Aorta (tissue), 5 donors: ENCODE measurements at regions of chr15 and their contacts with region 1.

Region 1: GRCh38 chr15:58440158-58440910 is 8.5 kb downstream of the LIPC start:
- DNase-seq: no peak
- ATAC-seq: peak; percentile 76
- H3K4me3 ChIP-seq: no peak overlapping the region
- H3K27ac ChIP-seq: peak overlapping the region; percentile 30 to 52
- H3K4me1 ChIP-seq: peaks cover 0 to 5% of the 10 kb centered on the region in 2 donors
- H3K27me3 ChIP-seq: no peaks in the 10 kb centered on the region

Region 2: DNA sequence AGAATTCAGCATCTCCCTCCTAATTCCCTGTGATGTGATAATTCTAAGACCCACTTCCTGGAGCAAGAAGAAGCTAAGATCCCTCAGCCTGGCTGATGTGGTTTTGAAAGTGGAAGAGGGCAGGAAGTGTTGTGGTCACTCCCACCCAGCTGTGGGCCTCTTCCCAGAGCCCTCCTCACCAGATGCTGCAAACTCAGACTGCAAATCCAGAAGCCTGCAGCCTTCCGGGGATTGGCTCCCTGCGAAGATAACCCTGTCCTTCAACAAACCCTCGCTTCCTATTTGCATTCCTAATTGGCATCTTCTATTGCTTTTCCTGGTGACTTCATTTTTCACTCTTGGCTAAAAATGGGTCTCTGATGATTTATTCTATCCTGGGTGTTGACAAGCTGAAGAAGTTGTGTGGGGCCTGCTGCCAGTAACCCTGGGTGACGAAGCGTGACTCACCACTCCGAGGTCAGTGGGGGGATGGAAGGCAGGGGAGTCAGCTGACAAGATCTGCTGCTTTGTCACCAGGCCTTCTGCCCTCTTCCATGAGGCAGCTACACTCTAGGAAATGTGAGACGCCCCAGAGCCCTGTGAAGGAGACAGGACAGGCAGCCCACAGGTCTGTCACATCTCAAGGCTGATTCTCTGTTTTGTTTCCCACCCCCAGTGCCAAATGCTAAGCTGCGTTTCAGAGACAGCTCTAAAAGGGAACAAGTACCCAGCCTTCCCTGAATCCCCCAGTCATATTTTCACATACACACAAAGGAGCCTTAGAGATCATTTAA is 108.2 kb before region 1 on chr15:
- intact Hi-C with region 1: loop called in 1 of 2 experiments (anchors 10 kb)
- DNase-seq: peak; percentile 96 to 98
- ATAC-seq: peak; percentile 96
- H3K4me3 ChIP-seq: no peak overlapping the region
- H3K27ac ChIP-seq: peak overlapping the region in 1 of 2 donors; percentile 41
- H3K4me1 ChIP-seq: peaks cover 0 to 4% of the 10 kb centered on the region in 2 donors
- H3K27me3 ChIP-seq: no peaks in the 10 kb centered on the region

Region 3: GRCh38 chr15:58484791-58485600 is 44.7 kb after region 1 on chr15:
- intact Hi-C with region 1: loop called in 1 of 2 experiments (anchors 5 kb)
- DNase-seq: peak in 1 of 2 donors; percentile 69
- ATAC-seq: no peak
- H3K4me3 ChIP-seq: no peak overlapping the region
- H3K27ac ChIP-seq: no peak overlapping the region
- H3K4me1 ChIP-seq: no peaks in the 10 kb centered on the region
- H3K27me3 ChIP-seq: no peaks in the 10 kb centered on the region

Region 4: DNA sequence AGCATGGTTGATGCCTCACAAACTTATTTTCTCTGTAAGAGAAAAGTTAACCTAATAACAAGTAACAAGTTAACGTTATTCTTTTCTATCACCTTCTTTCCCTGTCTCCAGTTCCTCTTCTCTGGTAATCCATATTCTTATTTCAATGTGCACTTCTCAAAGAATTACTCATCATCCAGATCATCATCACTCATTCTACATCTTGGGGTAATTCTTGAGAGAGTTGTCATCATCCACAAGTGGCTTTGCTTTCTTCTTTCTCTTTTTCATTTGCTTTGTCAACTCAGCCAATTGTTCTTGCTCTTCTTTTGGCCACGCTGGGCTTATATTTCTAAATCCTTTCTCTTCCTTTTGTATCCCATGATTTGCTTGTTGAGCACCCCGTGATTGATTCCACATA is 526.4 kb after region 1 on chr15:
- intact Hi-C with region 1: no loop called
- DNase-seq: no peak
- ATAC-seq: no peak
- H3K4me3 ChIP-seq: no peak overlapping the region
- H3K27ac ChIP-seq: no peak overlapping the region
- H3K4me1 ChIP-seq: no peaks in the 10 kb centered on the region
- H3K27me3 ChIP-seq: no peaks in the 10 kb centered on the region